Activated CD4-positive, alpha-beta T cell treated with anti-CD3 and anti-CD28 coated beads, Interleukin-2, amount 10 ng/mL, durations not matched to agents 24 days and 14 days (primary cell): ENCODE measurements at regions of chr21 and their contacts with region 1.

Region 1: DNA sequence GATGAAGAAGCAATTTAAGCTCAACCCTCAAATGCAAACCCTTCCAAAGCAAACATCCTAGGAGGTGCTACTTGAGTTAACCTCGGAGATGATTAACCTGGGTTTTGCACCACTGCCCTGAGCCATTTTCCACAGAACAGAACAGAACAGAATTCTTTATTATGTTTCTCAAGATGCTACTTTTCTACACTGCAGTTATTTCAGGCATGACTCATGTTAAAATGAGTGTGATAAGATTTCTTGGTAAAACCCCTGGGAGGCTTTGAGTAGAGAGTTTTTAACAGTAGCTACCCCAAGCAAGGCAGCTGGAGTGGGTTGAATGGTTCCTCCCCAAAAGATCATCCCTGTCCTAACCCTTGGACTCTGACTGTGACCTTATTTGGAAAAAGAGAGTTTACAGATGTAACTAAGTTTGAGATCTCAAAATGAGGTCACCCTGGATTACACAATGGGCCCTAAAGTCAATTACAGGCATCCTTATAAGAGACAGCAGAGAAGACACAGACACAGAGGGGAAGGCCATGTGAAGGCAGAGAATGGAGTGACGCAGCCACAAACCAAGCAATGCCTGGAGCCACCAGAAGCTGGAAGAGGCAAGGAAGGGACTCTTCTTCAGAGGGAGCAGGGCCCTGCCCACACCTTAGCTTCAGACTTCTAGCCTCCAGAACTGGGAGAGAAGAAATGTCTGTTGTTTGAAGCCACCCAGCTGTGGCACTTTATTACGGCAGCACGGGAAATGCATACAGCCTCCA is 153.4 kb downstream of the ETS2 start:
- DNase-seq: peak; percentile 64
- H3K4me3 Mint-ChIP-seq: peak overlapping the region; percentile 67
- H3K27ac Mint-ChIP-seq: peak overlapping the region; percentile 95
- H3K4me1 Mint-ChIP-seq: peaks cover 29% of the 10 kb centered on the region
- H3K27me3 Mint-ChIP-seq: no peaks in the 10 kb centered on the region

Region 2: GRCh38 chr21:38979228-38980121 is 20.4 kb after region 1 on chr21:
- intact Hi-C with region 1: loop called (anchors 1 kb)
- DNase-seq: peak; percentile 67
- H3K4me3 Mint-ChIP-seq: peak overlapping the region; percentile 28
- H3K27ac Mint-ChIP-seq: peak overlapping the region; percentile 75
- H3K4me1 Mint-ChIP-seq: peaks cover 36% of the 10 kb centered on the region
- H3K27me3 Mint-ChIP-seq: peaks cover 2% of the 10 kb centered on the region